ENCODE measurements at regions of chr12 and their contacts with region 1.

Region 1: GRCh38 chr12:47837190-47838171 is 17.8 kb upstream of the HDAC7 start:
- DNase-seq: peak; percentile 68
- ATAC-seq: peak; percentile 49
- H3K4me3 ChIP-seq: no peak overlapping the region
- H3K27ac ChIP-seq: no peak overlapping the region
- H3K4me1 ChIP-seq: peaks cover 14% of the 10 kb centered on the region
- H3K27me3 ChIP-seq: no peaks in the 10 kb centered on the region
- CTCF ChIP-seq: peak; percentile 81
- POLR2A ChIP-seq: no peak
- RAD21 ChIP-seq: peak; percentile 81

Region 2: DNA sequence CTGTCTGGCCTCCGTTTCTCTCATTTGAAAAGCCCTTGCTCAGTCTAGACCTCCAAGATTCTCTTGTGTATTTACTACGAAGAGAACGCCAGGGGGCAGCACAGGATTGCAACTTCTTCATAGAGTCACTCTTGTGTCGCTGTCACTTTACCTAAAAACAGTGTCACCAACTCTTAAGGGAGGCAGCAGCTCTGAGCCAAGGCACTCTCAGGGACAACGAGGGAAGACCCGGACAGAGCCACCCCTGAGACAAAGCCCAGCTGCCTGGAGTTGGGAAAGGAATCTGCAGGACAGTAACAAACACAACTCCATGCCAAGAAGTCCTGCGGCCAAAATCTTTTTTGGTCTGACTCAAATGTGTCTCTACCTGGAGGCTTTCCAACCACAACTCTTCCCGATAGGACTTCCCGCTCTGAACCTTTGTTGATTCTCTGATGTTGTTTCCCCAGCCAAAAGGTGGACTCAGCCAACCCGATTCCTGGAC is 122.0 kb before region 1 on chr12:
- CTCF ChIA-PET with region 1: interaction called, 6 read pairs
- POLR2A ChIA-PET with region 1: no interaction called
- dilution Hi-C with region 1: no loop called
- in situ Hi-C with region 1: loop called (anchors 5 kb)
- intact Hi-C with region 1: loop called (anchors 1 kb)
- DNase-seq: peak; percentile 71
- ATAC-seq: peak; percentile 74
- H3K4me3 ChIP-seq: no peak overlapping the region
- H3K27ac ChIP-seq: no peak overlapping the region
- H3K4me1 ChIP-seq: peaks cover 8% of the 10 kb centered on the region
- H3K27me3 ChIP-seq: no peaks in the 10 kb centered on the region
- CTCF ChIP-seq: peak; percentile 81
- POLR2A ChIP-seq: no peak
- RAD21 ChIP-seq: peak; percentile 84

Region 3: GRCh38 chr12:47779301-47779942 is 58.1 kb before region 1 on chr12:
- CTCF ChIA-PET with region 1: interaction called, 3 read pairs
- POLR2A ChIA-PET with region 1: no interaction called
- dilution Hi-C with region 1: loop called (anchors 10 kb)
- in situ Hi-C with region 1: no loop called
- intact Hi-C with region 1: loop called (anchors 1 kb)
- DNase-seq: peak; percentile 79
- ATAC-seq: peak; percentile 83
- H3K4me3 ChIP-seq: no peak overlapping the region
- H3K27ac ChIP-seq: no peak overlapping the region
- H3K4me1 ChIP-seq: peaks cover 21% of the 10 kb centered on the region
- H3K27me3 ChIP-seq: no peaks in the 10 kb centered on the region
- CTCF ChIP-seq: peak; percentile 98
- POLR2A ChIP-seq: peak; percentile 35; the same call in 1 of the 2 replicates
- RAD21 ChIP-seq: peak; percentile 96

Region 4: DNA sequence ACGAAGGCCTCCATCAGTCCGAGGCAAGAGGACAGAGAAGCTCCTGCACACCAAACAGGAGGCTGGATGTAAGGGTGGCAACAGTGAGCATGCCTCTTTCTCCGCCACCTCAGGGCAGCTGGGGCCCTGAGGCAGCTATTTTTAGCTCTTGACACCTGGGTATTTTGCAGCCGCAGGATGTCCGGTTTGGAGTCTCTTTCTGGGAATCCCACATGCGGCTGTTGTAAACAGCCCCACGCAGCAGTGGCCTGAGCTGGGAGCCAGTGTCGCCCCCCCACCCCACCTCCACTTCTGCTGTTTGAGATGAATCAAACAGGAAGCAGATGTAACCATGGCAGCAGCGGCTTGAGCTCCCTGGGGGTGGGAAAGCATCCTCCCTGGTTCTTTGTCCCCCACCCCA is 29.4 kb before region 1 on chr12:
- CTCF ChIA-PET with region 1: interaction called, 10 read pairs
- POLR2A ChIA-PET with region 1: no interaction called
- dilution Hi-C with region 1: no loop called
- in situ Hi-C with region 1: no loop called
- intact Hi-C with region 1: no loop called
- DNase-seq: peak; percentile 68
- ATAC-seq: peak; percentile 0; the same call in 1 of the 2 replicates
- H3K4me3 ChIP-seq: no peak overlapping the region
- H3K27ac ChIP-seq: peak overlapping the region; percentile 48
- H3K4me1 ChIP-seq: peaks cover 67% of the 10 kb centered on the region
- H3K27me3 ChIP-seq: no peaks in the 10 kb centered on the region
- CTCF ChIP-seq: no peak
- POLR2A ChIP-seq: no peak
- RAD21 ChIP-seq: no peak

Region 5: DNA sequence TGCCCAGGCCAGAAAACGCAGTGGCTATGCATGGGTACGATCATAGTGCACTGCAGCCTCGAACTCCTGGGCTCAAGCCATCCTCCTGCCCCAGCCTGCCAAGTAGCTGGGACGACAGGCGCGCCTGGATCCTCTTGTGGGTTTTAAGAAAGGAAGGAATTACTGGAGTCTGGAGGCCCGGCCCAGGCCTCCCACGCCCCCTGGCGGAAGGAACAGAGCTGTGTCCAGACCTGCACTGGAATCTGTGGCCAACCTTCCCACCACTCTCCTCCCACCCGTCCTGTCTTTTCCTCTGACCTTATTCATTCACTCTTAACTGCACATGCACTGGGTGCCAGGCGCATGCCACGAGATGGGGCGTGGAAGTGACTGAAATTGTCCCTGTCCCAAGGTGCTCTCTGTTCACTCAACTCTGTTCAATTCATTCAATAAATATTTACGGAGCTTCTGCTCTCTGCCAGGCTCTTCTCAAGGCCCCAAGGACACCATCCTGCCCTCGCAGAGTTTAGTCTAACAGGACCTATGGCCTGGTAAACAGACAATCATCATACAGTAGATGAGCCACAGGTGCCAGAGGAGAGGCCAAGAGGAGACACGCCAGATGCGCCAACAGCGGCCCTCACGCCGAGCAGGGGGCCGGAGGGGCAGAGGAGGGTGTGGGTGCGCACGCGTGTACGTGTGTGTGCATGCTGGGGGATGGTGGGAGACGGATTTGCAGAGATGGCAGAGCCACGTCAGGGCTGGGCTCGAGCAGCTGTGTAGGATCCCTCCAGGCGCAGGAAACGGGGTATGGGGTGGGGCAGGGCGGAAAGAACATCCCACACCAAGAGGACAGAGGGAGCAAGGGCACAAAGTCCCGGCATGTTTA is 112.2 kb after region 1 on chr12:
- CTCF ChIA-PET with region 1: interaction called, 3 read pairs
- POLR2A ChIA-PET with region 1: no interaction called
- dilution Hi-C with region 1: no loop called
- in situ Hi-C with region 1: no loop called
- intact Hi-C with region 1: loop called (anchors 2 kb)
- DNase-seq: peak; percentile 72
- ATAC-seq: peak; percentile 90
- H3K4me3 ChIP-seq: no peak overlapping the region
- H3K27ac ChIP-seq: no peak overlapping the region
- H3K4me1 ChIP-seq: peaks cover 12% of the 10 kb centered on the region
- H3K27me3 ChIP-seq: peaks cover 20% of the 10 kb centered on the region
- CTCF ChIP-seq: peak; percentile 88
- POLR2A ChIP-seq: no peak
- RAD21 ChIP-seq: peak; percentile 88

Measured in IMR-90 (cell line).